Common myeloid progenitor, CD34-positive (primary cell): ENCODE measurements at regions of chr17 and their contacts with region 1.

Region 1: DNA sequence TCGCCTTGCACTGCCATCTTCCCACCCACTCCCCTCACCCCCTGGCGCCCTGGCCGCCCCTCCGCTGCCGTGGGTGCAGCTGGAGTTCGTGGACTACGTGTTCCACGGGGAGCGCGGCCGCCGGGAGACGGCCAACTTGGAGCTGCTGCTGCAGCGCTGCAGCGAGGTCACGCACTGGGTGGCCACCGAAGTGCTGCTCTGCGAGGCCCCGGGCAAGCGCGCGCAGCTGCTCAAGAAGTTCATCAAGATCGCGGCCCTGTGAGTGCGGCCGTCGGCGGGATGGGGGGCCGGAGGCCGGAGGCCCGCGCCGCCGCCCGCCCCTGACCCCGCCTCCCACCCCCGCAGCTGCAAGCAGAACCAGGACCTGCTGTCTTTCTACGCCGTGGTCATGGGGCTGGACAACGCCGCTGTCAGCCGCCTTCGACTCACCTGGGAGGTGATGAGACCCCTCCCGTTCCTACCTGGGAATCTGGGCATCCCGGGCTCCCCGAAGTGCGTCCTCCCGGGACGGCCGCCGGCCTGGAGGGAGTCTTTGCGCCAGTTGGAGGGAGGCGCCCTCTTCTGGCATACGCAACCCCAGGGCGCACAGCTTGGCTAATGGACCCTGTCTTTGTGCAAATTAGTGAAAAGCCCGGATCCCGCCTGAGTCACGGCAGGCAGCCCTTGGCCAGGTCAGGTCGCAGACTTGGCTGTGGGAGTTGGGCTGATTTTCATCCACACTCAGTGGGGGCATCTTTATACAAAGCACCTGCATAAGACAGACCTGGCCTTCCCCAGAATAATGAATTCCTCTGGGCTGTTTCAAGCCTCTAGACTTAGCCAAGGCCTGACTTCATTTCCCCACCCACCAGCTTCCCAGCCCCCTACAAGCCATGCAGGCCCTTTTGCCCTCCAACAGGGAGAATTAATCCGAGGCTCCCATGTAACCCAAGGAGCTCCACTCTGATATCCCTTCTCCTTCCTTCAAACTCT is 14.3 kb downstream of the RAPGEFL1 start:
- DNase-seq: peak; percentile 73 to 78 (median 75)
- H3K4me3 ChIP-seq: peak overlapping the region; percentile 30 to 84 (median 75)
- H3K27ac ChIP-seq: no peak overlapping the region
- H3K4me1 ChIP-seq: peaks cover 0 to 29% (median 12%) of the 10 kb centered on the region in 4 experiments
- H3K27me3 ChIP-seq: peaks cover 0 to 3% (median 0%) of the 10 kb centered on the region in 5 experiments

Region 2: GRCh38 chr17:40168262-40168832 is 23.2 kb before region 1 on chr17:
- CTCF ChIA-PET with region 1: interaction called, 22 read pairs
- POLR2A ChIA-PET with region 1: no interaction called
- DNase-seq: peak; percentile 60 to 78 (median 74)
- H3K4me3 ChIP-seq: no peak overlapping the region
- H3K27ac ChIP-seq: no peak overlapping the region
- H3K4me1 ChIP-seq: no peaks in the 10 kb centered on the region
- H3K27me3 ChIP-seq: no peaks in the 10 kb centered on the region

Region 3: GRCh38 chr17:40177275-40177874 is 14.1 kb before region 1 on chr17 and contains the start of gene RAPGEFL1:
- CTCF ChIA-PET with region 1: interaction called, 70 read pairs
- POLR2A ChIA-PET with region 1: interaction called, 3 read pairs
- DNase-seq: peak; percentile 76 to 88 (median 83)
- H3K4me3 ChIP-seq: peak within 1 kb of the TSS; percentile 45 to 75 (median 52)
- H3K27ac ChIP-seq: no peak within 1 kb of the TSS
- H3K4me1 ChIP-seq: peaks cover 0 to 16% (median 11%) of the 10 kb centered on the region in 4 experiments
- H3K27me3 ChIP-seq: peaks cover 0 to 8% (median 0%) of the 10 kb centered on the region in 5 experiments

Region 4: DNA sequence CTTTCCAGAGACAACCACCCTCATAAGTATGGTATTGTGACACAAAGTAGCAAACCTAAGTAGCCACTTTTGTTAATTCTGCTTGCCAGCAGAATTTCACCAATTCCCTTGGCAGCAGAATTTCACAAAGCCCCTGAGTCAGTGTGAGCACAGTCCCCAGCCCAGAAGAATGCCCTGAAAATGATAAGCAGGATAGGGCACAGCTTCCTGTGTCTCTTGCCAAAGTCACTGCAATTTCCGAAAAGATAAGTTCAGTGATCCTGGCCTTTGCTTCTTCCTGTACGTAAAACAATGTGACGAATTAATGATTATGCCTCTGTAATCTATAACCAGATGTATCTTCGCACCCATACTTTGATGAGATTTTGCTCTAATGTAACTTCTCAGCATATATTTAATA is 11.6 kb after region 1 on chr17:
- CTCF ChIA-PET with region 1: interaction called, 41 read pairs
- POLR2A ChIA-PET with region 1: no interaction called
- DNase-seq: peak; percentile 73 to 84 (median 78)
- H3K4me3 ChIP-seq: no peak overlapping the region
- H3K27ac ChIP-seq: no peak overlapping the region
- H3K4me1 ChIP-seq: peaks cover 0 to 11% (median 1%) of the 10 kb centered on the region in 4 experiments
- H3K27me3 ChIP-seq: no peaks in the 10 kb centered on the region

Region 5: GRCh38 chr17:40219073-40219860 is 27.7 kb after region 1 on chr17 and contains the start of gene WIPF2:
- CTCF ChIA-PET with region 1: interaction called, 10 read pairs
- POLR2A ChIA-PET with region 1: no interaction called
- DNase-seq: peak; percentile 98 to 99 (median 98)
- H3K4me3 ChIP-seq: peak within 1 kb of the TSS; percentile 40 to 94 (median 87)
- H3K27ac ChIP-seq: peak within 1 kb of the TSS; percentile 93 to 96
- H3K4me1 ChIP-seq: peaks cover 0 to 12% (median 7%) of the 10 kb centered on the region in 4 experiments
- H3K27me3 ChIP-seq: no peaks in the 10 kb centered on the region